ENCODE measurements at regions of chr5 and their contacts with region 1.

Region 1: DNA sequence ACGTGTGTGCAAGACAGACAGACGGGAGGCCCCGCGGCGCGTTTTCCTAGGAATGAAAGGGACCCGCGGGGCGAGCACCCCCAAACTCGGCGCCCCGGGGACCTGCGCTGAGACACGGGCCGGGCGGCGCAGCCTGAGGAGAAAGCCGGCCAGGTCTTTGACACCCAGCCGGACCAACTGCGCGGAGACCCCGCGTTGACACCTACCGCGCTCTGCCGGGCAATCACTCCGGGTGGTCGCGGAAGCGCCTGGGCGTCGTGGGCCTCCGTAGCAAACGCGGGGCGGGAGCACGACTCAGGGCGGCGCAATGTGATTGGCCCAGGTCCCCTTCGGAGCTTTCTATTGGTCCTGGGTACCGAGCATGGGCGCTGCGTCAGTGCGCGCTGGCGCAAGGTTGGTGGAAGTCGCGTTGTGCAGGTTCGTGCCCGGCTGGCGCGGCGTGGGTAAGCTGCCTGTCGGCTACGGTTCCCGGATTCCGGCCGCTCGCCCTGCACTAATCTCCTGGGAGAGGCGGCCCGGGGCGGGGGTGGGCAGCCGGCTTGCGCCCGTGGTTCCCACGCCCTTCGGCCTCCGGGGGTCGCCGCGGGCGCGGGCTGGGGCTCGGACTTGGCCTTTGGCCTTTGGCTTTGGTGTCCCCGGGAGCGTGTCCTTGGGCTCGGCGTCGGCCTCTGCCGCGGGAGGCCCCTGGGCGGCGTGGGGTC is at the starts of genes FASTKD3 and MTRR:
- DNase-seq: peak; percentile 93
- ATAC-seq: peak; percentile 99
- H3K4me3 Mint-ChIP-seq: peak within 1 kb of the TSS; percentile 94
- H3K27ac Mint-ChIP-seq: peak within 1 kb of the TSS; percentile 95
- H3K4me1 Mint-ChIP-seq: peaks cover 68% of the 10 kb centered on the region
- H3K27me3 Mint-ChIP-seq: no peaks in the 10 kb centered on the region
- total RNA-seq, gene FASTKD3: 9.2 to 9.6 TPM
- total RNA-seq, gene MTRR: 49.3 to 52.9 TPM

Region 2: DNA sequence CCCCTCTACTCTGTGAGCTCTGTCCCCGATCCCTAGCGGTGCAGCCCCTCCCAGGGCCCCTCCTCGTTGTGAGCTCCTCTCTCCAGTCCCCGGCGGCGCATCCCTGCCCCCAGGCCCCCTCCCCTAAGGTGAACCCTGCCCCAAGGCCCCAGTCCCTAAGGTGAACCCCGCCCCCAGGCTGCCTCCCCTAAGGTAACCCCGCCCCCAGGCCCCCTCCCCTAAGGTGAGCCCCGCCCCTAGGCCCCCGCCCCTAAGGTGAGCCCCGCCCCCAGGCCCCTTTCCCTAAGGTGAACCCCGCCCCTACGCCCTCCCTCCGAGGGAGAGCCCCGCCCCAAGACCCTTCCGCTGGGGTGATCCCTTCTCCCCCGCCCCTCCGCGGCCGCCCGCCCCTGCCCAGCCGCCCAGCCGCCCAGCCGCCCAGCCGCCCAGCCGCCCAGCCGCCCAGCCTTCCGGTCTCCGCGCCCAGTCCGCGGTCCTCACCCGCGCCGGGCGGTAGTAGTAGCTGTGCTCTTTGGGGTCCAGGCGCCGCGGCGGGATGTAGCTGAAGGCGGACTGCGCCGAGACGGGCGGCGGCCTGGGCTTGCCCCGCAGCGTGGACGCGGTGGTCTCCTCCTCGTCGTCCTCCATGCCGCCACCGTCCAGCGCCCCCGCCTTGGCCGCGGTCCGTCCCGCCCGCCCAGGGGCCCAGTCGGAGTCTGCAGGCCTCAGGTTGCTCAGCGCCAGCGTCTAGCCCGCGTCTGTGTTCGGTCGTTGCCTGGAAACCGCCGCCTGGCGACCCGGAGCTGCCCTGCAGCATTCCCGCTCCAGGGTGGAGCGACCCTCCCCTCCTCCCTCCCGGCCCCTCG is 18.3 kb before region 1 on chr5 and contains the start of gene CFAP90:
- CTCF ChIA-PET with region 1: no interaction called
- POLR2A ChIA-PET with region 1: interaction called, 3 read pairs
- intact Hi-C with region 1: loop called in 1 of 2 experiments (anchors 2 kb)
- DNase-seq: peak; percentile 65
- ATAC-seq: peak; percentile 65
- H3K4me3 Mint-ChIP-seq: peak within 1 kb of the TSS; percentile 66
- H3K27ac Mint-ChIP-seq: peak within 1 kb of the TSS; percentile 5
- H3K4me1 Mint-ChIP-seq: peaks cover 18% of the 10 kb centered on the region
- H3K27me3 Mint-ChIP-seq: peaks cover 16% of the 10 kb centered on the region
- total RNA-seq, gene CFAP90: not detected

Region 3: GRCh38 chr5:7856855-7857254 is 12.1 kb before region 1 on chr5:
- CTCF ChIA-PET with region 1: interaction called, 21 read pairs
- POLR2A ChIA-PET with region 1: interaction called, 4 read pairs
- intact Hi-C with region 1: loop called in 1 of 2 experiments (anchors 1 kb)
- DNase-seq: peak; percentile 57
- ATAC-seq: peak; percentile 71
- H3K4me3 Mint-ChIP-seq: no peak overlapping the region
- H3K27ac Mint-ChIP-seq: no peak overlapping the region
- H3K4me1 Mint-ChIP-seq: peaks cover 26% of the 10 kb centered on the region
- H3K27me3 Mint-ChIP-seq: no peaks in the 10 kb centered on the region

Region 4: DNA sequence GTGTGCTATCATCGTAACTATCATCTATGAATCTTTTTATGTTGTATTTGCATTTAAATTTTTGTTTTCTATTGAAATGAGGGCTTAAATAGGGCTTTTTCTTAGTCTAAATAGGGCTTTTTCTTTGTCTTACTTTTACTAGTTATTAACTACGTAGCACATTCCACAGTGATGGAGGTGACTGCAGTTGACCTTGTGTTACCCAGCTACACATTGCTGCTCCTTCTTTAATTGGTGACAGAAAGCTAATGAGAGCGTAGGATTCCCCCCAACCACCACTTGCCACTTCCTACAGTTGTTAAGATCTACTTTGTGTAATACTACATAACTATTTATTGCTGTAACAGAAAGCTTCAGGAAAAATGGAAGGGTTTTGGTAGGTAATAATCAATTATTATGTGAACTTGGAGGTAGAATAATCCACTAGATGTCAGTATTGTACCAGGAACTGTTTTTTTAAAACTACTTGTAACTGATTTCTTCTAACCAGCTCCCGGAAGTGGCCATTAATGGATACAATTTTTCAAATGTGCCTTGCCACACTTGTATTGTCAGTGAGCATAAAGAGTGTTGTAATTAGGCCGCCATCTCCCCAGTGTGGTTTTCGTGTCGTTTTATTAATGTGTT is 18.0 kb after region 1 on chr5:
- CTCF ChIA-PET with region 1: interaction called, 10 read pairs
- POLR2A ChIA-PET with region 1: interaction called, 9 read pairs
- intact Hi-C with region 1: no loop called
- DNase-seq: no peak
- ATAC-seq: no peak
- H3K4me3 Mint-ChIP-seq: no peak overlapping the region
- H3K27ac Mint-ChIP-seq: no peak overlapping the region
- H3K4me1 Mint-ChIP-seq: peaks cover 7% of the 10 kb centered on the region
- H3K27me3 Mint-ChIP-seq: no peaks in the 10 kb centered on the region

Region 5: GRCh38 chr5:8299716-8300115 is 430.8 kb after region 1 on chr5:
- CTCF ChIA-PET with region 1: no interaction called
- POLR2A ChIA-PET with region 1: no interaction called
- intact Hi-C with region 1: no loop called
- DNase-seq: no peak
- ATAC-seq: no peak
- H3K4me3 Mint-ChIP-seq: no peak overlapping the region
- H3K27ac Mint-ChIP-seq: no peak overlapping the region
- H3K4me1 Mint-ChIP-seq: no peaks in the 10 kb centered on the region
- H3K27me3 Mint-ChIP-seq: no peaks in the 10 kb centered on the region

Region 6: DNA sequence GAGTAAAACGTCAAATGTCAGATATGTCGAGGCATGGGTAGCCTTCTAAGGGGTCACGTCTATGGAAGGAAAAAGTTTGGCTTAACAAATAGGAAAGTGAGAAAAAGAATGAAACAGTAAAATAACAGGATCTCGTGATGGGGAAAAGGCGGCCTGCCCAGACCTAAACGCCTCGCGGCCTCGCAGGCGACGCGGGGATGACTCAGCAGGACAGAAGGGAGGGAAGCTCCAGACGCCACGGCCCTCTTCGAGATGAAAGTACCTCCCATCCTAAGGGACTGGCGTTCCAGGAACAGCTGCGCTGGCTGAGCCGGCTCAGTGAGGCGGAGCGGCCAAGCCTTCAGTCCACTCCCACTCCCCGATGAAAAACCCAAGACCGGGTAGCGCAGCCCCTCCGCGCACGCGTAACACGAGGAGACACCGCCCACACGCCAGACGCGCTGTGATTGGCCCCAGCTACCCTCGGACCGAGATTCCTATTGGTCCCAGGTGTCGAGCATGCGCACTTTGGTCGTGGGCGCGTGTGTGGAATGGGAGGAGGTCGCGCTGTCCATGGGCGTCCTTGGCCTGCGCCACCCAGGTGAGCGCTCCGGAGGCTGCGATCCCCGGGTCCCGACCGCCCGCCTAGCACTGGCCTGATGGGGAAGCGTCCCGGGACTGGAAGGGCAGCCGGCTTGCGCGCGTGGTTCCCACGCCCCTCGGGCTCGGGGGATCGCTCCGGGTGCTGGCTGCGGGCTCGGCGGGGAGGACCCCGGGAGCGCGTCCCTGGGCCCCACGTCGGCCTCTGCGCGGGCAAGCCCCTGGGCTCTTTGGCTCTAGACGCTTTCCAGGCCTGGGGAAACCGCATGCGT is 588.5 kb after region 1 on chr5:
- CTCF ChIA-PET with region 1: no interaction called
- POLR2A ChIA-PET with region 1: no interaction called
- intact Hi-C with region 1: loop called in 1 of 2 experiments (anchors 2 kb)
- DNase-seq: peak; percentile 92
- ATAC-seq: peak; percentile 96
- H3K4me3 Mint-ChIP-seq: peak overlapping the region; percentile 81
- H3K27ac Mint-ChIP-seq: peak overlapping the region; percentile 71
- H3K4me1 Mint-ChIP-seq: peaks cover 20% of the 10 kb centered on the region
- H3K27me3 Mint-ChIP-seq: no peaks in the 10 kb centered on the region

Measured in activated CD4-positive, alpha-beta T cell treated with anti-CD3 and anti-CD28 coated beads for 36 hours (primary cell).